ENCODE measurements at regions of chr20 and their contacts with region 1.

Region 1: DNA sequence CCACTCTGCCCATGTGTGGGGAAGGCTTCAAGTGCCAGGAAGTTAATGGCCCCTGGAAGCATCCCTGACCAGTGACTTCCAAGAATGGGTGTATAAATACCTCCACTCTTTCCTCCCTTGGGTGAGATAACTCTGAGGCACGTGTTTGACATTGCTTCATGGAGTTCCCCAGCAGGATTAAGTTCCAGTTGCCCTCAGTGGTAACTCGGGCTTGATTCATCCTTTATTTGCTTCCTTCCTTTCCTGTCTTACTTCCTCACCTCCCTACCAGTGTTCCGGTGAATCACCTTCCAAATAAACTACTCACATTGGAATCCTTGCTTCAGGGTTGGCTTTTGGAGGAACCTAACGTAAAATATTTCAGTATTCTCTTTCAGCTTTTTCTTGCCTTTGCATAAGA is 84.6 kb upstream of the JAG1 start:
- DNase-seq: no peak
- H3K4me3 ChIP-seq: no peak overlapping the region
- H3K27ac ChIP-seq: no peak overlapping the region
- H3K4me1 ChIP-seq: peaks cover 6 to 32% of the 10 kb centered on the region in 2 donors
- H3K27me3 ChIP-seq: no peaks in the 10 kb centered on the region
- CTCF ChIP-seq: no peak

Region 2: GRCh38 chr20:11274141-11274594 is 515.7 kb after region 1 on chr20:
- intact Hi-C with region 1: loop called (anchors 10 kb)
- DNase-seq: peak in 1 of 2 donors; percentile 69
- H3K4me3 ChIP-seq: no peak overlapping the region
- H3K27ac ChIP-seq: no peak overlapping the region
- H3K4me1 ChIP-seq: peaks cover 0 to 3% of the 10 kb centered on the region in 2 donors
- H3K27me3 ChIP-seq: no peaks in the 10 kb centered on the region
- CTCF ChIP-seq: peak; percentile 58 to 77 (median 58)